H1 (cell line): ENCODE measurements at regions of chr13 and their contacts with region 1.

Region 1: DNA sequence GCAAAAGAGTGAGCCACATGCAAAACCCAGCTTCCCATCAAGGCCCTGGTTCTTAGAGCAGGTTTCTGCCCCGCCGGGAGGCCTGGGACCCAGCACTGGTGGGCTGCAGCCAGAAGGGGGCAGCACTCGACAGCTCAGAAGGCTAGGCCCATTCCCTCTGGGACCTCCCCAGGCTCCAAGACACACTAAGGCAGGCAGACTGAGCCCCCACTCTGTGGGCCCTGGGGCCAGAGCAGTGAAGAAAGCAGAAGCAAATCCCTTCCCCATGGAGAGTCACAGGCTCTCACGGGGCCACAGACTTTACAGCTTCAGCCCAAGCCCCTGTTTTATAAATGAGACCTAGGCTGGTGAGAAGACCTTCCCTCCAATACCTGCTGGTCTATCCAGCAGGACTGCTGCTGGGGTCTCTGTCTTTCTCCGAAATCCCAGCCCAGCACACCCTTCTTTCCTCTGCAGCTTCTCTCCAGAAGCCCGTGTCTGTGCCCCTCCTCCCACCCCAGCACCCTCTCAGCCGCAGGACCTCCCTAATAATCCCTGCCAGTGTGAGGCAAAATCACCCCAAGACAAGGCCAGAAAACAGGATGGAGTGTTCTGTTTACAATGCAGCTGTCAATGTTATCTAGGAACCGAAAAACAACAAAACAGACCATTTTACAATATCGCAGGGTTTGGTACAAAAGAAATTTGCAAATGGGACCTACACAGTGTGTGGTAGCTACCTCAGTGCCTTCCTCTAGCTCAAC is 109.3 kb downstream of the ABCC4 start:
- DNase-seq: peak; percentile 75 to 97
- H3K4me3 ChIP-seq: no peak overlapping the region
- H3K27ac ChIP-seq: no peak overlapping the region
- H3K4me1 ChIP-seq: no peaks in the 10 kb centered on the region; a peak in 2 of 7 replicates
- H3K27me3 ChIP-seq: no peaks in the 10 kb centered on the region
- CTCF ChIP-seq: peak; percentile 95 to 99 (median 98)
- EP300 ChIP-seq: no peak
- POLR2A ChIP-seq: no peak
- RAD21 ChIP-seq: peak; percentile 95

Region 2: GRCh38 chr13:94917824-94918223 is 274.2 kb before region 1 on chr13:
- CTCF ChIA-PET with region 1: no interaction called
- POLR2A ChIA-PET with region 1: no interaction called
- DNase-seq: peak in 1 of 2 experiments; percentile 9
- H3K4me3 ChIP-seq: no peak overlapping the region
- H3K27ac ChIP-seq: no peak overlapping the region
- H3K4me1 ChIP-seq: peaks cover 0 to 7% (median 3%) of the 10 kb centered on the region in 4 experiments; a peak in 5 of 7 replicates
- H3K27me3 ChIP-seq: no peaks in the 10 kb centered on the region
- CTCF ChIP-seq: no peak
- EP300 ChIP-seq: no peak
- POLR2A ChIP-seq: no peak
- RAD21 ChIP-seq: no peak

Region 3: GRCh38 chr13:95083758-95084157 is 108.2 kb before region 1 on chr13:
- CTCF ChIA-PET with region 1: no interaction called
- POLR2A ChIA-PET with region 1: no interaction called
- DNase-seq: no peak
- H3K4me3 ChIP-seq: no peak overlapping the region
- H3K27ac ChIP-seq: no peak overlapping the region
- H3K4me1 ChIP-seq: no peaks in the 10 kb centered on the region
- H3K27me3 ChIP-seq: no peaks in the 10 kb centered on the region
- CTCF ChIP-seq: no peak
- EP300 ChIP-seq: no peak
- POLR2A ChIP-seq: no peak
- RAD21 ChIP-seq: no peak

Region 4: DNA sequence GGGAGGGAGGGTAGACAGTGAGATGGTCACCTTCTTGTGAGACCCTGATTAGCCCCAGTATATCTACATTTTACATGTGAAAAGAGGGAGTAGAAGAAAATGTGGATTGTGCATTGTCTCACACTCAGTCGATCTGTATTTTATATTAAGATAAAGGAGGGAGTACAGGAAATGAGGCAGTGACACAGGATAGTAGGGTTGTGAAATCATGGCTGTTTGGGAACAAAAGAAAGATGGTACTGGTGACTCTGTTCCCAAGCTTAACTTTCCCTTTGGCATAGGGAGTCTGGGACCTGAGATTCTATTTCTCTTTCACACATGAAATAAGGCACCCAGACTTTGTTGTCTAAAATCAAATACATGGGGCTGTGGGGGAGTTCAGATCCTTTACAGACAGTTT is 85.4 kb before region 1 on chr13:
- CTCF ChIA-PET with region 1: no interaction called
- POLR2A ChIA-PET with region 1: no interaction called
- DNase-seq: no peak
- H3K4me3 ChIP-seq: no peak overlapping the region
- H3K27ac ChIP-seq: no peak overlapping the region
- H3K4me1 ChIP-seq: no peaks in the 10 kb centered on the region
- H3K27me3 ChIP-seq: no peaks in the 10 kb centered on the region
- CTCF ChIP-seq: no peak
- EP300 ChIP-seq: no peak
- POLR2A ChIP-seq: no peak
- RAD21 ChIP-seq: no peak

Region 5: DNA sequence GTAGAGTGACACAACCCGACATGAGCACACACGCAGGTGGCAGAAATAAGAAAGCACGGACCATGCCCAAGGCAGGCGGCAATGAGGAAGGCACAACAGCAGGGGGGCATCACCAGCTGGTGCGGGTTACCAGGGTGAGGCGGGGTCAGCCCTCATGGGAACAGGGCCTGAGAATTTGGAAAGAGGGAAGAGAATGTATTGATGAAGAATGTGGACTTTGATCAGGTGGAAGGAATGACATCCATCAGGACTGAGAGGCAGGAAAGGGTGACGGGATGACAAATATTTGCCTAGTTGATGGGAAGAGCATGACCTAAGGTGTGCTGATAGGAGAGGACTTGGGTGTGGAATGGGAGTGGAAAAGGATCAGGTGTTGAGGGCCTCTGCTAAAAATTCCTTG is 68.3 kb before region 1 on chr13:
- CTCF ChIA-PET with region 1: no interaction called
- POLR2A ChIA-PET with region 1: no interaction called
- DNase-seq: no peak
- H3K4me3 ChIP-seq: no peak overlapping the region
- H3K27ac ChIP-seq: no peak overlapping the region
- H3K4me1 ChIP-seq: no peaks in the 10 kb centered on the region
- H3K27me3 ChIP-seq: no peaks in the 10 kb centered on the region
- CTCF ChIP-seq: no peak
- EP300 ChIP-seq: no peak
- POLR2A ChIP-seq: no peak
- RAD21 ChIP-seq: no peak

Region 6: DNA sequence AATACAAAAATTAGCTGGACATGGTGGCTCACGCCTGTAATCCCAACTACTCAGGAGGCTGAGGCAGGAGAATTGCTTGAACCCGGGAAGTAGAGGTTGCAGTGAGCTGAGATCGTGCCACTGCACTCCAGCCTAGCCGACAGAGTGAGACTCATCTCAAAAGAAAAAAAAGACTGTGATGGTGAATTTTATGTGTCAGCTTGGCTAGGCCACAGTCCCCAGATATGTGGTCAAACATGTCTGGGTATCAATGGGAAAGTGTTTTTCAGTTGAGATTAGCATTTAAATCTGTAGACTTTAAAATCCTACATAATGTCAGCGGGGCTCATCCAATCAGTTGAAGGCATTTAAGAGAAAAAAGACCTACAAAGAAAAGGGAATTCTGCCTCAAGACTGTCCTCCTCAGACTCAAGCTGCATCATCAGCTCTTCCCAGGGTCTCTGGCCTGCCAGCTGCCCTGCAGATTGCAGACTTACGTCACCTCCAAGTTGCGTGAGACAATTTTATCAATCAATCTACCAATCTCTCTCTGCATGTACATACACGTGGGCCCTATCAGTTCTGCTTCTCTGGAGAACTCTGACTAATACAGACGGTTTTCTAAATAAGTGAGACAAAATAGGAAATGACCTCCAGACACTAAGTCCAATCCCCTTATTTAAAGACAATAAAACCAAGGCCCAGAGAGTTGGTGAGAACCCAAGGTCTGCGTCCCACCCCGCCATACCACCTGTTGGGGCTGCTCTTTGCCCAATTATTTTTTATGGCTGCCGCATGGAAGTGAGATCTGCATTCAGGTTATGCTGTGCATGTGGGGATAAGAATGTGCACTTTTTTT is 10.0 kb after region 1 on chr13:
- CTCF ChIA-PET with region 1: interaction called, 16 read pairs
- POLR2A ChIA-PET with region 1: no interaction called
- DNase-seq: no peak
- H3K4me3 ChIP-seq: no peak overlapping the region
- H3K27ac ChIP-seq: no peak overlapping the region
- H3K4me1 ChIP-seq: no peaks in the 10 kb centered on the region; a peak in 1 of 7 replicates
- H3K27me3 ChIP-seq: no peaks in the 10 kb centered on the region
- CTCF ChIP-seq: no peak
- EP300 ChIP-seq: no peak
- POLR2A ChIP-seq: no peak
- RAD21 ChIP-seq: no peak

Region 7: GRCh38 chr13:95267662-95268342 is 75.8 kb after region 1 on chr13:
- CTCF ChIA-PET with region 1: interaction called, 11 read pairs
- POLR2A ChIA-PET with region 1: no interaction called
- DNase-seq: no peak
- H3K4me3 ChIP-seq: no peak overlapping the region
- H3K27ac ChIP-seq: no peak overlapping the region
- H3K4me1 ChIP-seq: no peaks in the 10 kb centered on the region
- H3K27me3 ChIP-seq: no peaks in the 10 kb centered on the region
- CTCF ChIP-seq: no peak
- EP300 ChIP-seq: no peak
- POLR2A ChIP-seq: no peak
- RAD21 ChIP-seq: no peak

Region 8: DNA sequence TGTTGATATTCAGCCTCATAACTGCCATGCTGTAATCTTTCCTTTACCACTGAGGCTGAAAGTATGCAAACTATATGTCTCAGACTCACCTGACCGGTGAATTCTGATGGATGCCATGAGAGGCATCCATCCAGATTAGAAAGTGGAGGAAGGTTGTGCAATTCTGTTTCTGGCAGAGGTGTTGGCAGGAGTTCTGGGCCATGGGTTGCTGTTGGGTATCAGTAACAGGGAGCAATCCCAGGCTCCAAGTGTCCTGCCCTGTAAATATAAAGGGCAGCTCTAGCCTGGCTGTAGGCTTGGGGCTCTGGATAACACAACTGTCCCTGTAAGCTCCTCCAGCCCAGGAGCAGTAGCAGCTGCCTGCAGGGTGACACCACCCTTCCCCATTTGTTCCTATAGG is 186.6 kb after region 1 on chr13:
- CTCF ChIA-PET with region 1: interaction called, 112 read pairs
- POLR2A ChIA-PET with region 1: interaction called, 6 read pairs
- DNase-seq: no peak
- H3K4me3 ChIP-seq: no peak overlapping the region
- H3K27ac ChIP-seq: no peak overlapping the region
- H3K4me1 ChIP-seq: peaks cover 0 to 6% (median 0%) of the 10 kb centered on the region in 4 experiments; a peak in 1 of 7 replicates
- H3K27me3 ChIP-seq: no peaks in the 10 kb centered on the region
- CTCF ChIP-seq: no peak
- EP300 ChIP-seq: no peak
- POLR2A ChIP-seq: no peak
- RAD21 ChIP-seq: no peak

Region 9: DNA sequence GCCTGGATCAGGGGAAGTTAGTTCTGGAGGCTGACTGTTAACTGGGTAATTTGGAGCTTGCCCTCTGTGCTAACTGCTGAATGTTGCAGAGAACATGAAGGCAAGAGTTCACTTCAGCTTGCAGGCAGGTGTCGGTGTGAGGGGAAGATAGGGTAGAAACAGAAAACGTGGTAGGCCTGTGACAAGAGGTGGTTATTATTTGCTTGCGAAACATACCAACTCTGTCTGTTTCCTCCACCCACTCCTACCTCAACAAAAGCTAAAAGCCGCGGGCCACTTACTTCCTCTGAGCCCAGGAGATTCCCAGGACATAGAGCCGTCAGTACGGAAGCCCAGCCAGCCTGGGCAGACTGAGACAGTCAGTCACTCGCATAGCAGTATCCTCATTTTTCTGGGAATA is 228.5 kb after region 1 on chr13:
- CTCF ChIA-PET with region 1: interaction called, 15 read pairs
- POLR2A ChIA-PET with region 1: no interaction called
- DNase-seq: no peak
- H3K4me3 ChIP-seq: no peak overlapping the region
- H3K27ac ChIP-seq: no peak overlapping the region
- H3K4me1 ChIP-seq: no peaks in the 10 kb centered on the region; a peak in 1 of 7 replicates
- H3K27me3 ChIP-seq: no peaks in the 10 kb centered on the region
- CTCF ChIP-seq: no peak
- EP300 ChIP-seq: no peak
- POLR2A ChIP-seq: no peak
- RAD21 ChIP-seq: no peak

Region 10: GRCh38 chr13:95471960-95472359 is 280.0 kb after region 1 on chr13:
- CTCF ChIA-PET with region 1: interaction called, 14 read pairs
- POLR2A ChIA-PET with region 1: no interaction called
- DNase-seq: no peak
- H3K4me3 ChIP-seq: no peak overlapping the region
- H3K27ac ChIP-seq: no peak overlapping the region
- H3K4me1 ChIP-seq: peaks cover 0 to 6% (median 2%) of the 10 kb centered on the region in 4 experiments; a peak in 2 of 7 replicates
- H3K27me3 ChIP-seq: no peaks in the 10 kb centered on the region; a peak in 1 of 7 replicates
- CTCF ChIP-seq: no peak
- EP300 ChIP-seq: no peak
- POLR2A ChIP-seq: no peak
- RAD21 ChIP-seq: no peak